ENCODE measurements at regions of chr12 and their contacts with region 1.

Region 1: DNA sequence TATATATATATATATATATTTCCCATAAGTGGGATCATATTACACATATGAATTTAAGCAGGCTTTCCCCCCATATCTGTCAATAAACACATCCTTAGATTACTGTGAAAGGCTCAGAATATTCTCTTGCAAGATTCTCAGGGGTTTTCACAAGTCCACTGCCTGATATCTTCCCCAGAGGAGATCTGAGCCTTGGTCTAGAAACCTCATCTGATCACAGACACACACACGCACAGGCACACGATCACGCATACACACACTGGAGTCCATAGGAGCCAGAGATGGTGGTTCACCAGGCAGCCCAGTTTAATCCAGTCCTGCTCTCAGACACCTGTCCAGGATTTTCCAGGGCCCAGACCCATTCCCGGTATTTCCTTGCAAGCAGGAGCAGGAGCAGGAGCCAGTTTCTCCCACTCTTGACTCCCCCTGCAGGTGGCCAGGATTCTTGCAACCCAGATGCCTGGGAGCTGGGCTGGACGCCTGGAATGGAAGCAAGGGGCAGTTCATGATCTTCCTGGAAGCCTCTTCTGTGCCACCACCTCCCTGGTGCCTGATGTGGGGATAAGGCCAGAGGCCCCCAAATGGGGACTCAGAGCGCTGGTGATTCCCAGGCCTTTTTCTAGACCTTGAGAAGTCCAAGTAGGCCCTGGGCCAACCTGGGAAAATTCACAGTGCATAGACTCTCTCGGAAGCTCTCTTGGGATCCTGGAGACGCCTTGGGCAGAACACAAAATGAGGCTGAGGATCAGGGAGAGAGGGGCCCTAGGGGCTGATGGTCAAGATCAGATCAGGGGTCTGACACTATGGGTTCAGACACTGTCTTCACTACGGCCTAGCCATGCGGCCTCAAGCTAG is 16.5 kb upstream of the KRT78 start:
- DNase-seq: peak; percentile 56
- ATAC-seq: peak; percentile 82
- H3K4me3 ChIP-seq: no peak overlapping the region
- H3K27ac ChIP-seq: no peak overlapping the region
- H3K4me1 ChIP-seq: peaks cover 22% of the 10 kb centered on the region
- H3K27me3 ChIP-seq: no peaks in the 10 kb centered on the region
- CTCF ChIP-seq: peak; percentile 87
- EP300 ChIP-seq: no peak
- POLR2A ChIP-seq: no peak
- RAD21 ChIP-seq: peak; percentile 58; the same call in 1 of the 2 replicates

Region 2: GRCh38 chr12:52582971-52583456 is 282.3 kb before region 1 on chr12:
- CTCF ChIA-PET with region 1: interaction called, 7 read pairs
- POLR2A ChIA-PET with region 1: no interaction called
- in situ Hi-C with region 1: loop called (anchors 5 kb)
- intact Hi-C with region 1: loop called (anchors 2 kb)
- DNase-seq: peak; percentile 40
- ATAC-seq: peak; percentile 94
- H3K4me3 ChIP-seq: no peak overlapping the region
- H3K27ac ChIP-seq: no peak overlapping the region
- H3K4me1 ChIP-seq: no peaks in the 10 kb centered on the region
- H3K27me3 ChIP-seq: peaks cover 4 to 49% of the 10 kb centered on the region in 2 experiments; a peak in 2 of 5 replicates
- CTCF ChIP-seq: peak; percentile 82
- EP300 ChIP-seq: no peak
- POLR2A ChIP-seq: no peak
- RAD21 ChIP-seq: peak; percentile 71

Region 3: DNA sequence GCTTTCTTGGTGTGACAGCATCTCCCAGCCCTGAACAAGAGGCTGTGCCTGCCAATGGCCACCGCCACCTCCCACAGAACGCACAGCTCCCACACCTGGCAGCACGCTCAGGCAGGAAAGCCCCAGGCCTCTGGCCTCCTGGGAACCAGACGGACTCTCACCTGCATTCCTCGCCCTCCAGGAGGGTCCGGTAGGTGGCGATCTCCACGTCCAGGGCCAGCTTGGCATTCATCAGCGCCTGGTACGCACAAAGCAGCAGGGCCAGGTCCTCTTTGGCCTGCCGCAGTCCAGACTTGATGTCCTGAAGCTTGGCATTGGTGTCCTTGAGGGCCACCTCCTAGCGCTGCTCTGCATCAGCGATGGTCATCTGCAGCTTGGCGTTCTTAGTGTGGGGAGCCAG is 149.9 kb before region 1 on chr12:
- CTCF ChIA-PET with region 1: interaction called, 4 read pairs
- POLR2A ChIA-PET with region 1: no interaction called
- in situ Hi-C with region 1: loop called (anchors 10 kb)
- intact Hi-C with region 1: loop called (anchors 1 kb)
- DNase-seq: peak; percentile 31
- ATAC-seq: peak; percentile 94
- H3K4me3 ChIP-seq: no peak overlapping the region
- H3K27ac ChIP-seq: no peak overlapping the region
- H3K4me1 ChIP-seq: no peaks in the 10 kb centered on the region
- H3K27me3 ChIP-seq: peaks cover 1 to 46% of the 10 kb centered on the region in 2 experiments; a peak in 4 of 5 replicates
- CTCF ChIP-seq: peak; percentile 80
- EP300 ChIP-seq: no peak
- POLR2A ChIP-seq: no peak
- RAD21 ChIP-seq: peak; percentile 29; the same call in 1 of the 2 replicates

Region 4: DNA sequence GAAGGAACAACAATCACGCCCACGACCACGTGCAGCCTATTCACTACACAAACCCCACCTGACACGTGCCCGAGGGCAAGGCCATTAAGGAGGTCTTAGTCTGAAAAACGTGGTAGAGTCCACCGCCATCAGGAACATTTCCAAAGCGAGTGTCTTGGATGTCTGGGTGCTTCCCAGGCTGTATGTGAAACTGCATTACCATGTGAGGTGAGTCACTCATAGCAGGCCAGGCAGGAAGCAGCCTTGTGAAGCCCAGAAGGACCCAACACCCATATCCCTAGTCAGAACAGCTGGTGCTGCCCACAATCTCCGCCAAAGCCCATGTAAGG is 27.9 kb before region 1 on chr12:
- CTCF ChIA-PET with region 1: no interaction called
- POLR2A ChIA-PET with region 1: no interaction called
- in situ Hi-C with region 1: no loop called
- intact Hi-C with region 1: no loop called
- DNase-seq: no peak
- ATAC-seq: no peak
- H3K4me3 ChIP-seq: no peak overlapping the region
- H3K27ac ChIP-seq: no peak overlapping the region
- H3K4me1 ChIP-seq: no peaks in the 10 kb centered on the region
- H3K27me3 ChIP-seq: peaks cover 6 to 70% of the 10 kb centered on the region in 2 experiments
- CTCF ChIP-seq: no peak
- EP300 ChIP-seq: no peak
- POLR2A ChIP-seq: no peak
- RAD21 ChIP-seq: no peak

Region 5: GRCh38 chr12:53670299-53670698 is 805.0 kb after region 1 on chr12:
- CTCF ChIA-PET with region 1: no interaction called
- POLR2A ChIA-PET with region 1: no interaction called
- in situ Hi-C with region 1: no loop called
- intact Hi-C with region 1: no loop called
- DNase-seq: no peak
- ATAC-seq: no peak
- H3K4me3 ChIP-seq: no peak overlapping the region
- H3K27ac ChIP-seq: no peak overlapping the region
- H3K4me1 ChIP-seq: peaks cover 16% of the 10 kb centered on the region
- H3K27me3 ChIP-seq: no peaks in the 10 kb centered on the region; a peak in 1 of 5 replicates
- CTCF ChIP-seq: no peak
- EP300 ChIP-seq: no peak
- POLR2A ChIP-seq: no peak
- RAD21 ChIP-seq: no peak

Measured in HepG2 (cell line).